HCT116 (cell line): ENCODE measurements at regions of chr20 and their contacts with region 1.

Region 1: GRCh38 chr20:48129196-48129942 is 344.1 kb upstream of the SULF2 start:
- DNase-seq: no peak
- ATAC-seq: no peak
- H3K4me3 ChIP-seq: no peak overlapping the region
- H3K27ac ChIP-seq: no peak overlapping the region
- H3K4me1 ChIP-seq: peaks cover 0 to 3% of the 10 kb centered on the region in 2 experiments; a peak in 1 of 4 replicates
- H3K27me3 ChIP-seq: peaks cover 29% of the 10 kb centered on the region
- CTCF ChIP-seq: no peak
- POLR2A ChIP-seq: no peak
- RAD21 ChIP-seq: no peak

Region 2: GRCh38 chr20:48188657-48189551 is 59.5 kb after region 1 on chr20:
- CTCF ChIA-PET with region 1: no interaction called
- POLR2A ChIA-PET with region 1: no interaction called
- RAD21 ChIA-PET with region 1: no interaction called
- intact Hi-C with region 1: loop called (anchors 10 kb)
- DNase-seq: peak; percentile 12
- ATAC-seq: peak; percentile 76
- H3K4me3 ChIP-seq: no peak overlapping the region
- H3K27ac ChIP-seq: no peak overlapping the region
- H3K4me1 ChIP-seq: no peaks in the 10 kb centered on the region
- H3K27me3 ChIP-seq: no peaks in the 10 kb centered on the region
- CTCF ChIP-seq: peak; percentile 45 to 54 (median 51); a peak in 5 of 6 replicates
- POLR2A ChIP-seq: no peak
- RAD21 ChIP-seq: peak; percentile 68

Region 3: GRCh38 chr20:48247966-48248365 is 118.6 kb after region 1 on chr20:
- CTCF ChIA-PET with region 1: no interaction called
- POLR2A ChIA-PET with region 1: no interaction called
- RAD21 ChIA-PET with region 1: no interaction called
- intact Hi-C with region 1: no loop called
- DNase-seq: no peak
- ATAC-seq: no peak
- H3K4me3 ChIP-seq: no peak overlapping the region
- H3K27ac ChIP-seq: no peak overlapping the region
- H3K4me1 ChIP-seq: no peaks in the 10 kb centered on the region
- H3K27me3 ChIP-seq: peaks cover 16% of the 10 kb centered on the region; the same call in 1 of the 2 replicates
- CTCF ChIP-seq: no peak
- POLR2A ChIP-seq: no peak
- RAD21 ChIP-seq: no peak

Region 4: DNA sequence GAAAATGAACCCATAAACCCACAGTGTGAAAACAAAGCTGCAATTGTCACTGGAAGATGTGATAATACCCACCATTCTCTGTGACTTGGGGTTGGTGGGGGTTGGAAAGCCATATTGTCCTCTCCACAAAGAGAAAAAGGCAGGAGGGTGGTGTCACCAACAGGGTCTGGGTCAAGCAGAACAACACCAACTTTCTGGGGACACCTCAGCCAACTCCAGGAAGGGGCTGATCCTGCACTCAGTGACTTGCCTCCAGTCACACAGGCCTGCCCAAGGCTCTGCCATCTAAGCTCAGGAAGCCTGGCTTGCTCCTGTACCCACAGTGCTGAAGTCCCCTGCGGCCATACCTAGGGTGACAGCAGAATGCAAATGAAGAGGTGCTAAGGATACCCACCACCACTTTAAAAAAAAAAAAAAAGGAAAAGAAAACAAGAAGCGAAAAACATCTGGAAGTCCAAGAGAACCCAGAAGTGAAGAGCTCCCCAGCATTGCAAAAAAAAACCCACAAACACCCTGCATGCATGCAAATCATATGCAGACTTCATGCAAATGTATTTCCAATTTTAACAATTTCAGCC is 587.8 kb after region 1 on chr20:
- CTCF ChIA-PET with region 1: no interaction called
- POLR2A ChIA-PET with region 1: no interaction called
- RAD21 ChIA-PET with region 1: no interaction called
- intact Hi-C with region 1: no loop called
- DNase-seq: no peak
- ATAC-seq: no peak
- H3K4me3 ChIP-seq: no peak overlapping the region
- H3K27ac ChIP-seq: no peak overlapping the region
- H3K4me1 ChIP-seq: no peaks in the 10 kb centered on the region
- H3K27me3 ChIP-seq: no peaks in the 10 kb centered on the region
- CTCF ChIP-seq: no peak
- POLR2A ChIP-seq: no peak
- RAD21 ChIP-seq: no peak